Activated T-helper 2 cell treated with anti-CD3 and anti-CD28 coated beads, Interferon-gamma antibody, Interleukin-2, Interleukin-4, amounts not matched to agents 10 μg/mL and 5 μg/mL and 100 μg/mL, durations not matched to agents 14 hours and 24 hours and 36 hours (primary cell): ENCODE measurements at regions of chr5 and their contacts with region 1.

Region 1: DNA sequence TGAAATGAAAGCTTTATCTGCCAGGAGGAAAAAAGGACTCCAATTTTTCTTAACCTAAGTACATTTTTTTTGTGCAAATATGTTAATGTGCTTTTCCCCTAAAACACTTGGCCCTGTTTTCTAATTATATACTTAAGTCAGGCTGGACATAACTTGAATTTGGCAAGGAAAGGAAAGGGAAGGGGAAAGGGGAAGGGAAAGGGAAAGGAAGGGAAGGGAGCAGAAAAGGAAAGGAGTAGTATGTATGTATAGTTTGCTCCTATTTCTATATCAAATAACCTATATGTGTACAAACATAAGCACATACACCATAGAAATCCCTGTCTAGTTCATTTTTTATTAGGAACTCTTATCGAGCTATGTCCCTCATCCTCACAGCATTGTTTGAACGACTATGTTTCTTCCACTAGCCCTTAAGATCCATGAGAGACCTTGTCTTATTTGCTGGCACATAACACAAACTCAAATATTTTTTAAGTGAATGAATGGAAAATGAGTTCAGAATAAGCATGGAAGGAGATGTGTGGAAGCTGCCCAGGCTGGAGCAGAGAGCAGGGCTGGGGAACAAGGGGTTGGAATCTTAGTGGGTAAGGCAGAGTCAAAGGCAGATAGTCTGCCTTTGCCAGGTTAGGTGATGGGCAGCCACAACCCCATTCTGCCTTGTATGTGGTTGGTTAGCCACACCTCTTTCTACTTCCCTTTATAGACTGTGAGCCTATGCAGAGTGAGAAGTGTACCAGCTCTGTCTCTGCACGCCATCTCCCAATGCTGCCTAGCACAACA is 70.0 kb downstream of the KLHL3 start:
- DNase-seq: peak; percentile 24
- H3K4me3 Mint-ChIP-seq: no peak overlapping the region
- H3K27ac Mint-ChIP-seq: peak overlapping the region; percentile 79
- H3K4me1 Mint-ChIP-seq: peaks cover 27% of the 10 kb centered on the region
- H3K27me3 Mint-ChIP-seq: no peaks in the 10 kb centered on the region

Region 2: DNA sequence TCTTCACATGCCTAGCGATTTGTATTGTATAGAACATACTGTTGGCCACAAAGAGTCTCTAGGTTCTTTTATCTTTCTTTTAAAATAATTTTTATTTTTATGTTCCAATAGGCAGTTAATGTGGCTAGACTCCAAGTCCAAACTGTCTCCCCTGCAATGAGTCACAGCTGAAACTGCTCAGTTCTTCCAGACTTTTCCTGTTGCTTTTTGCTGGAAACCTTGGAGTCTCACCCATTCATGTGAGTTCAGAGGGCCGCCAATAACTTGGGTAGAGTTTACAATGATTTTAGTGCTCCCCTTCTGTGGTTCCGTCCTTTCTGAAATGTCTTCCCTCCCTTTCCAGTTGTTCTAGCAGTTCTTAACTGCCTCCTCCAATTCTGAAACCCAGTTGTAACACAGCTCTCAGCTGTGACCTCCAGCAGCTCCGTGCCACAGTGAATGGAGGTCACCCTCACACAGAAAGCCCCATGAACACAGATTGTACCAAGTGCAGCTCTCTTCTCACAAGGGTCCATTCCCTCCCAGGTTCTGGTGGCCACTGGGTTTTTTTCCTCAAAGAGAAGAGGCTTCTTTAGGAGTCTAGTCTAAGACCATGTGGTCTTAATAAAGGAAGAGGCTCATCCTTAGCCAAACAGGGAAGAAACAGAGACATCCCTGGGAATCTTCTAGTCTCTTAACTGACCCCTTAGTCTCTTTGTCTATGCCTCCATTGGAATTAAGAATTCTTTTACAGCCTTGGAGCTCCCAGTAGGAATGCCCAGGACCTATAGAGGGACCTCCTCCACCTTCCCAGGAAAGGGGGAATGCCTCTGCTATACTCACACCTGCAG is 365.2 kb before region 1 on chr5:
- intact Hi-C with region 1: no loop called
- DNase-seq: no peak
- H3K4me3 Mint-ChIP-seq: no peak overlapping the region
- H3K27ac Mint-ChIP-seq: no peak overlapping the region
- H3K4me1 Mint-ChIP-seq: no peaks in the 10 kb centered on the region
- H3K27me3 Mint-ChIP-seq: peaks cover 6% of the 10 kb centered on the region

Region 3: GRCh38 chr5:137649228-137649935 is 16.5 kb before region 1 on chr5:
- intact Hi-C with region 1: no loop called
- DNase-seq: no peak
- H3K4me3 Mint-ChIP-seq: no peak overlapping the region
- H3K27ac Mint-ChIP-seq: no peak overlapping the region
- H3K4me1 Mint-ChIP-seq: no peaks in the 10 kb centered on the region
- H3K27me3 Mint-ChIP-seq: no peaks in the 10 kb centered on the region

Region 4: DNA sequence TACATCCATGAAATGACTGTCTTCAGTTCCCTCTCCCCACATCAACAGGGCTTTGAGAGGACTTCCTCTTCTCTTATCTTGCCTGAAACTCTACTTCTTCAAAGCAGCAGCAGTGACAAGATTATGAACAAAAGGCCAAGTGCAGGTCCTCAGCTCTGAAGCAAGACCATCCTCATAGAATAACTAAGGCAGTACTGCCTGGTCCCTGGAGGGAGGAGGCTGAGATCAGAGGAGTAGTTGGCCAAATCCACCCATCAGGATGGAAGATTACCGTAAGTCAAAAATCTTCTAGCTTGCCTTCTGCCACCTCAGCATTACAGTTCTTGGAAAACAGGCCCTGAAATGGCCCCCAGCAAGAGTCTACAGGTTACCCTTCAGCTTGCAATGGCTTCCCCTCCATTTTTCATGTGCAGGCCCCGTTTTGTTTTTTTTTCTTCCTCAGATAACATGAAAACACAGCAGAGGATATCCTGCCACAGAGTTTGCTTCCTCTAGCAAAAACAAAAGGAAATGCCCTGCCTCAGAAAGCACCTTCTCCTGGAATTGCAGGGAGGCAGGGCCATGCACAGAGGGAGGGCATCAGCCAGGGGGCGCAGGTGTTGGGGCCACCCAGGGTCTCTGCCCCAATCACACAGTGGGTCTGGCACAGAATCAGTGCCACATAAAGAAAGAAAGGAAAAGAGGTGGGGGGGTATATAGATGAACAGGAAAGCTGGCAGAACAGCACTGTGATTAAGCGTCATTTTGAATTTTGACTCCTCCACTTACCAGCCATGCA is 30.0 kb after region 1 on chr5:
- intact Hi-C with region 1: loop called (anchors 1 kb)
- DNase-seq: peak; percentile 12
- H3K4me3 Mint-ChIP-seq: no peak overlapping the region
- H3K27ac Mint-ChIP-seq: peak overlapping the region; percentile 75
- H3K4me1 Mint-ChIP-seq: peaks cover 21% of the 10 kb centered on the region
- H3K27me3 Mint-ChIP-seq: no peaks in the 10 kb centered on the region